ENCODE measurements at regions of chr12 and their contacts with region 1.

Region 1: GRCh38 chr12:120132863-120133385 is 16.4 kb upstream of the RAB35 start:
- DNase-seq: peak in 1 of 6 donors; percentile 14
- ATAC-seq: no peak
- H3K4me3 ChIP-seq: no peak overlapping the region
- H3K27ac ChIP-seq: no peak overlapping the region
- H3K4me1 ChIP-seq: no peaks in the 10 kb centered on the region
- H3K27me3 ChIP-seq: no peaks in the 10 kb centered on the region
- CTCF ChIP-seq: no peak

Region 2: GRCh38 chr12:119804011-119804641 is 328.8 kb before region 1 on chr12:
- intact Hi-C with region 1: no loop called
- DNase-seq: peak; percentile 55 to 85 (median 70)
- ATAC-seq: peak; percentile 96 to 98 (median 97)
- H3K4me3 ChIP-seq: no peak overlapping the region
- H3K27ac ChIP-seq: no peak overlapping the region
- H3K4me1 ChIP-seq: peaks cover 0 to 9% (median 3%) of the 10 kb centered on the region in 3 donors
- H3K27me3 ChIP-seq: no peaks in the 10 kb centered on the region
- CTCF ChIP-seq: peak in 2 of 4 donors; percentile 25 to 29

Region 3: GRCh38 chr12:120067084-120067869 is 65.6 kb before region 1 on chr12:
- intact Hi-C with region 1: no loop called
- DNase-seq: no peak
- ATAC-seq: no peak
- H3K4me3 ChIP-seq: no peak overlapping the region
- H3K27ac ChIP-seq: no peak overlapping the region
- H3K4me1 ChIP-seq: no peaks in the 10 kb centered on the region
- H3K27me3 ChIP-seq: no peaks in the 10 kb centered on the region
- CTCF ChIP-seq: no peak

Region 4: GRCh38 chr12:120181991-120182631 is 49.2 kb after region 1 on chr12:
- intact Hi-C with region 1: loop called in 1 of 3 experiments (anchors 10 kb)
- DNase-seq: no peak
- ATAC-seq: peak; percentile 36 to 78 (median 48)
- H3K4me3 ChIP-seq: no peak overlapping the region
- H3K27ac ChIP-seq: peak overlapping the region in 2 of 4 donors; percentile 9 to 33
- H3K4me1 ChIP-seq: no peaks in the 10 kb centered on the region
- H3K27me3 ChIP-seq: no peaks in the 10 kb centered on the region
- CTCF ChIP-seq: no peak